ENCODE measurements at regions of chr9 and their contacts with region 1.

Region 1: DNA sequence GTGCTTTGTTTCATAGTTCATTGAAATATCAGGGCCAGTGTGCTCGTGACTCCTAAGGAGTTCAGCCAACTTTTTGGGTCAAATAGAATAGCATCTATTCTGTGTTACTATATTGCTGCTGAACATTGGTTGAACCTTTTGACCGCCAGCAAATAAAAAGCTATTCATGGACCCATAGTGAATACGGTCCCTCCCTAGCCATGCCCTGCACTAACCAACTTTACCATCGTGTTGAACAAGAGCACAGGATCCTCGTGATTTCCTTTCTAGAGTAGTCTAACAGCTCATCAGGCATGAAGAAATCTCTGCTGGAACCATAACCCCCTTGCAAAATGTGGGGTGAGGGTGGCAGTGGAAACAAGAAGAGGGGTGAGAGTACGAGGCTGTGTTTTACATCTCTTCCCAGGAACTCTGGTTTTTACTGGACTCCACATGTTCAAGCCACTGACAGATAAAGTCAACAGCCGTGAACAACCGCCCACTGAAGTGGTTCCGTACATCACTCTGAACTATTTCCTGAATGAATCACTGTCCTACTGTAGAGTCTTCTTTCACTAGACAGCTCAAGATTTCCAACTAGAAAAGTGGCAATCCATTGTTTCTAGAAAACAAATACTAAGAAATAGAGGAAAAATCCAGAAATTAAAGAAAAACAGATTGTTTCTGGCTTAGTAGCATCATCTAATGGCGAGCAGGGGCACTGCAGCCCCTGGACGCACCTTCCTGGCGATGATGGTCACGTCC is 70.1 kb upstream of the SPATA31E1 start:
- DNase-seq: peak in 1 of 3 donors; percentile 67
- ATAC-seq: peak in 1 of 2 donors; percentile 63
- H3K4me3 ChIP-seq: no peak overlapping the region
- H3K27ac ChIP-seq: no peak overlapping the region
- H3K4me1 ChIP-seq: no peaks in the 10 kb centered on the region
- H3K27me3 ChIP-seq: no peaks in the 10 kb centered on the region

Region 2: DNA sequence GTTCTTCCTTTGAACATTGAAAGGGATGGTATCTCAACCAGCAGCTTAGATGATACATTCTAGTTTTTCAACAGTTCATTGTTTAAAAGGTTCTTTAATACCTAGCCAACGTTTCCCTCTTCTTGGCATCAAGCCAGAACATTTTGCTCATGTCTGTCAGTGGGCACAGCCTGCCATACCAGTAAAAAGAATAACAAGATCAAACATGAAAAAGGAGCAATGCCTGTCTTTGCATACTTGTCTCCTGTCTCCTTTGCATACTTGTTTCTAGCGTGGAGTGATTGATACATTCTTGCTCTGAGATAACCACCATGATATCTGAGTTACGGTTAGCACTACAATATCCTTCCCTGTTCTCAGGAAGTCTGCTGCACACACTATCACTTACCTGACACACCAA is 563.5 kb before region 1 on chr9:
- intact Hi-C with region 1: no loop called
- DNase-seq: no peak
- ATAC-seq: no peak
- H3K4me3 ChIP-seq: no peak overlapping the region
- H3K27ac ChIP-seq: no peak overlapping the region
- H3K4me1 ChIP-seq: no peaks in the 10 kb centered on the region
- H3K27me3 ChIP-seq: no peaks in the 10 kb centered on the region

Region 3: DNA sequence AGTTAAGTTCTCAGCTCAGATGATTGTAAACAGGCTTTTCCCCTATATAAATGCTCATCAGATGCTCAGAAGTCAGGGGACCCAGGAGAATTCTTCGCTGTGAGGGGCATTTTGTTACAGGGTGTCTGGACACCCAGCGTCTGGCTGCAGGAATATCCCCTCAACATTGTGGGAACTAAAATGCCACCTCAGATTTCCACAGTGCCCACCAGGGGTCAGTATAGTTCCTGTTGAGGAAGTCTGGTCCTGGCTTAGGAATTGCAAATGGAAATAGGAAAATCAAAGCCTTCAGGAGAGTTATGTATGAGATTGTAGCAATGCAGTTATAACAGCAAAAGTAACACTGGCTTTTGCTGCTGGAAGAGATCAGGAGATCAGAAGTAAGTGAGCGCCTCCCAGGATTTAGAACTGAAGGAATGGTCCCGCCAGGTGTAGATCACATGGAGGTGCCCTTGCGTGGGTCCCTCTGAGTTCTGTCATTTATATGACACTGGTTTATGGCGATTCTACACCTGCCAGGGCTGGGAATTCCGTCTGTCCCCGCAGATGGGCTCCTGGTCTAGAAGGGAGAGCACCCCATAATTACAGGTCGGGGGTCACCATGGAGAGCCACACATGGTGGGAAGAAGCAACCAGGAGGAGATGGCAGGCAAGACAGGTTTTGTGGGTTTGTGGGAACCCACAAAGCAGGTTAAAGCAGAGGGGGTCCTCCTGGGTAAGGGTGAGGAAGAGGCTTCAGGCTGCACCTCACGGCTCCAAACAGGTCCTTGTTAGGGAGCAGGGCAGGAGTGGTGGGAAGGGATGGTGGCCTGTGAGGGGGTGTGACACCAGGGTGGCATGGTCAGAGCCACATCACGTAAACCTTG is 133.7 kb before region 1 on chr9:
- intact Hi-C with region 1: loop called (anchors 2 to 5 kb)
- DNase-seq: peak in 2 of 3 donors; percentile 49 to 75
- ATAC-seq: peak in 1 of 2 donors; percentile 52
- H3K4me3 ChIP-seq: no peak overlapping the region
- H3K27ac ChIP-seq: no peak overlapping the region
- H3K4me1 ChIP-seq: no peaks in the 10 kb centered on the region
- H3K27me3 ChIP-seq: no peaks in the 10 kb centered on the region

Region 4: DNA sequence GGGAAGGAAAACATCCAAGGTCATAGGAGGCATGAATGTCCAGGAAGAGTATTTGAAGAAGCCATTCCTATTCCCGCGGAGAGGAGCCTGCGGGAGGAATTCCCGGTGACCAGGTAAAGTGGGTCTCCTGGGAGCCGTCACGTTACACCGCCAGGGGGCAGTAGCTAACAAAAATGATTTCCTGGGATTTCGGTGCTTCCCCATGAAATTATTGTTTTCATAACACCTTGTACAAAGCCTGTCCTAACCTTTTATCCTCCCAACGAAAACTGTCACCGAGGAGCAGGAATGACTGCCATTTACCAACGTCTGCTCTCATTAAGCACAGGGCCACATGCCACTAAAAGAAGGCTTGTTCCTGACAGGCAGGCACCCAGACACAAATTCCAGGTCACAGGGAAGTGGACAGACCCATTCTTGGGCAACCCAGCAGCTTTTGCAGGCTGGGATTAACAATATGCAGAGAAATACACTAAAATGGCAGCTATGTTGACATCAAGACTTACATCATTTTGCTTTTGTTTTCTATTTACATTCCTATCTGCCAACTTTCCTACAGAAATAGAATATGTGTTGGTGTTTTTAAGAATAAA is 127.8 kb before region 1 on chr9:
- intact Hi-C with region 1: loop called (anchors 2 to 5 kb)
- DNase-seq: peak in 2 of 3 donors; percentile 63 to 73
- ATAC-seq: no peak
- H3K4me3 ChIP-seq: no peak overlapping the region
- H3K27ac ChIP-seq: no peak overlapping the region
- H3K4me1 ChIP-seq: no peaks in the 10 kb centered on the region
- H3K27me3 ChIP-seq: no peaks in the 10 kb centered on the region

Region 5: GRCh38 chr9:88106491-88106890 is 293.9 kb after region 1 on chr9:
- intact Hi-C with region 1: no loop called
- DNase-seq: no peak
- ATAC-seq: peak in 1 of 2 donors; percentile 56
- H3K4me3 ChIP-seq: no peak overlapping the region
- H3K27ac ChIP-seq: no peak overlapping the region
- H3K4me1 ChIP-seq: no peaks in the 10 kb centered on the region
- H3K27me3 ChIP-seq: peaks cover 4% of the 10 kb centered on the region

Region 6: GRCh38 chr9:88236531-88237478 is 424.3 kb after region 1 on chr9:
- intact Hi-C with region 1: no loop called
- DNase-seq: peak; percentile 31 to 84 (median 84)
- ATAC-seq: peak; percentile 86 to 87
- H3K4me3 ChIP-seq: no peak overlapping the region
- H3K27ac ChIP-seq: no peak overlapping the region
- H3K4me1 ChIP-seq: peaks cover 4% of the 10 kb centered on the region
- H3K27me3 ChIP-seq: no peaks in the 10 kb centered on the region

Measured in right cardiac atrium (tissue), 5 donors.